Activated CD4-positive, alpha-beta memory T cell treated with anti-CD3 and anti-CD28 coated beads for 36 hours (primary cell): ENCODE measurements at regions of chr19 and their contacts with region 1.

Region 1: DNA sequence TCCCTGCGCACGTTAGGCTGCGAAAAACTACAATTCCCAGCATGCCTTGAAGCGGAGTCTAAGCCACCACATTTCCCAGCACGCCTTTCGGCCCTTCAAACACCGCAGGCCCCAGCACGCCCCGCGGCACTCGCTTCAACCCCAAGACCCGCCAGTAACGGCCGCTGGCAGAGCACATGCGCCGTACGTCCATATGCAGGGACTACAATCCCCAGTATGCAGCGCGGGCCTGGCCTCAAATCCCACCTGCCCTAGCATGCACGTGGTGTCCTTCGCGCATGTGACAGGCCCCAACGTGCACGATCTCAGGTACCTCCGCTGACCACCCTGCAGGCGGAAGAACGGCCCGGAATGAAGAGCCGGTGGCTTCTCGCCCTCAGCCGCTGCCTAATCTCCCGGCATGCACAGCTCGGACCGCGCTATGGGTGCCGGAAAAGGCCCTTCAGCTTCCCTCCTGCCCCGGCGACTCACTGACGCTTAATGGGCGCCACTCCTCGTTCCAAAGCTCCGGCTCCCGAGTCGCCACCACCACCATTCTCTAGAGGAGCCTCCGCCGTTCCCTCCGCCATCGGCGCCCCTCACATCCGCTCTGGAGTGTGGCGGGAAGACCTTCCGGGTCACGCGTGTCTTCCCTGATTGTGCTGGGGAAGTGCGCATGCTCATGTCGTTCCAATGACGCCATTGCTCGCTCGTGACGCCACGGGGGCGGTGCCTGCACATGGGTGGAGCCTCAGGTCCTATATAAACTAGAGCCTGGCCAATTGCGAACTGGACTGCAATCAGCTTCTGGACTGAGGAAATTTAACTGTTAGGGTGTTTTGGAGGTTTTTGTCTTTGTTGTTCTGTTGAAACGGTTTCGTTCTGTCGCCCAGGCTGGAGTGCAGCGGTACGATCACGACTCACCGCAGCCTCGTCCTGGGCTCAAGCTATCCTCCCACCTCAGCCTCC is at the start of gene DUS3L:
- DNase-seq: peak; percentile 98
- H3K4me3 Mint-ChIP-seq: peak within 1 kb of the TSS; percentile 100
- H3K27ac Mint-ChIP-seq: peak within 1 kb of the TSS; percentile 100
- H3K4me1 Mint-ChIP-seq: peaks cover 12% of the 10 kb centered on the region
- H3K27me3 Mint-ChIP-seq: no peaks in the 10 kb centered on the region
- total RNA-seq, gene DUS3L: 41.9 to 44.4 TPM

Region 2: DNA sequence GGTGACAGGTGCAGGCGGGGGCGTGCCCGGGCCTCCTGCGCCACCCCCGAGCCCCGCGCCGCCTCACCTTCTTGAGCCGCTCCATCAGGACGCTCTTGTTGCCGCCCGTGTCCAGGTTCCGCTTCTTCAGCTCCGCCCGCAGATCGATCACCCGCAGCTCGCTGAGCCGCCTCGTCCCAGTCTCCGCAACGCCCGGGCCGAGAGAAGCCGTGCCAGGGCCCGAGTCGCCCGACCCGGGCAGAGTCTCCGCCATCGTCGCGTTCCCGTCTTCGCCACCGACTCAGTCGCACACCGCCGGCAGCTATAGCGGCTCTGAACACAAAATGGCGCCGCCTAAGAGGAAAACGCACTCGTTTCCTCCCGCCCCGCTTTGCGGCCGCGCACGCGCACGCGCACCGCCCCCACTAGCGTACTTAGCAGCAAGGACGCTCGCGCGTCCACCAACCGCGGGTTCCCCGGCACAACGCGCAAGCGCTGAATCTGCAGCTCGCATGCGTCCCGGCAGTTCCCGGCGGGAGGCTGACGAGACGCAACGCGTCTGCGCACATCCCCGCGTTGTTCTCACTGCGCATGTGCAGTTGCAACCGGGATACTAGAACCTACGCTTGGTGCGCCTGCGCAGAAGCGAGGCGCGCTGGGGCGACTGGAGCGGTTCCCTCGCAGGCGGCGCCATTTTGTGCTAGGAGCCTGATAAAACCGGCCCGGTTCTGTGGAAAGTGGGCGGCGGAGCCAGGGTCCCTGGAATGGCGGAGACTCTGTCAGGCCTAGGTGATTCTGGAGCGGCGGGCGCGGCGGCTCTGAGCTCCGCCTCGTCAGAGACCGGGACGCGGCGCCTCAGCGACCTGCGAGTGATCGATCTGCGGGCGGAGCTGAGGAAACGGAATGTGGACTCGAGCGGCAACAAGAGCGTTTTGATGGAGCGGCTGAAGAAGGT is 168.1 kb before region 1 on chr19 and contains the starts of genes SAFB and SAFB2:
- CTCF ChIA-PET with region 1: no interaction called
- POLR2A ChIA-PET with region 1: no interaction called
- intact Hi-C with region 1: loop called (anchors 2 kb)
- DNase-seq: peak; percentile 100
- H3K4me3 Mint-ChIP-seq: peak within 1 kb of the TSS; percentile 100
- H3K27ac Mint-ChIP-seq: peak within 1 kb of the TSS; percentile 100
- H3K4me1 Mint-ChIP-seq: peaks cover 67% of the 10 kb centered on the region
- H3K27me3 Mint-ChIP-seq: peaks cover 3% of the 10 kb centered on the region
- total RNA-seq, gene SAFB: 103 to 113 TPM
- total RNA-seq, gene SAFB2: 63.5 to 76.4 TPM

Region 3: DNA sequence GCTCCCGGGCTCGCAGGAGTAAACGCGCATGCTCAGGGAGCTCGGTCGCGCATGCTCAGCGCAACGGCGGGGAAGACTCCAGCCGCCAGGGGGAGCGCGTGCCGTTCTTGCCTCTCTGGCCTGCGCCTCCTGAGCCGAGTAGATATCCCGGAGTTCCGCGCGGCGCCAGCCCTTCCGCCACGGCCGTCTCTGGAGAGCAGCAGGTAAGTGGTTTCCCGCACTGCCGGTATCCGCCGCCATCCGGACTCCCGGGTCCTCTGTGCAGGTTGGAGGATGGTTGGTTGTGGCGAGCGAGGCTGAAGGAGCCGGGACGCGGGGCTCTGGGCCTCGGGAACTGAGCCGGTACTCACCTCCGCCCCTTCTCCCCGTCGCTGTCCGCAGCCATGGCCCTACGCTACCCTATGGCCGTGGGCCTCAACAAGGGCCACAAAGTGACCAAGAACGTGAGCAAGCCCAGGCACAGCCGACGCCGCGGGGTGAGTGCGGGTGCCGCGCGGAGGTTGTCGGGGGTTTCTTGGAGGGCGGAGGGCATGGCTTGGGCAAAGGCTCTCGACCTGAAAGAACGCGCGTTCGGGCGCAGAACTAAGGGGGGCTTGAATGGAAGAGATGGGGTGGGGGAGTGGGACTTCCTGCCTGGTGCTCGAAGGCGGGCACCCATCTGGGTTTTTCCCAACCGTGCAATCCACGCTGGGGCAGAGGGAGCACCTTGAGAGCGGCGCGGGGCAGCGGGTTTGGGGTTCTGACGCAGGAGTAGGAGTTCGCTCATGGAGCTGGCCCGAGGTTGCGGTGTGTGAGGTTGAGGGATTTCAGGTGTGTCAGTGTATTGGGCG is 100.5 kb before region 1 on chr19 and contains the start of gene RPL36:
- CTCF ChIA-PET with region 1: interaction called, 10 read pairs
- POLR2A ChIA-PET with region 1: interaction called, 5 read pairs
- intact Hi-C with region 1: loop called (anchors 2 kb)
- DNase-seq: peak; percentile 99
- H3K4me3 Mint-ChIP-seq: peak within 1 kb of the TSS; percentile 96
- H3K27ac Mint-ChIP-seq: peak within 1 kb of the TSS; percentile 95
- H3K4me1 Mint-ChIP-seq: peaks cover 31% of the 10 kb centered on the region
- H3K27me3 Mint-ChIP-seq: no peaks in the 10 kb centered on the region
- total RNA-seq, gene RPL36: 1,487 to 1,524 TPM

Region 4: GRCh38 chr19:5827891-5828660 is 37.2 kb after region 1 on chr19:
- CTCF ChIA-PET with region 1: interaction called, 3 read pairs
- POLR2A ChIA-PET with region 1: interaction called, 4 read pairs
- intact Hi-C with region 1: loop called (anchors 1 kb)
- DNase-seq: peak; percentile 97
- H3K4me3 Mint-ChIP-seq: peak overlapping the region; percentile 98
- H3K27ac Mint-ChIP-seq: peak overlapping the region; percentile 97
- H3K4me1 Mint-ChIP-seq: peaks cover 4% of the 10 kb centered on the region
- H3K27me3 Mint-ChIP-seq: no peaks in the 10 kb centered on the region

Region 5: GRCh38 chr19:7069042-7069903 is 1278.4 kb after region 1 on chr19 and contains the start of gene ZNF557:
- CTCF ChIA-PET with region 1: no interaction called
- POLR2A ChIA-PET with region 1: no interaction called
- intact Hi-C with region 1: loop called (anchors 10 kb)
- DNase-seq: peak; percentile 99
- H3K4me3 Mint-ChIP-seq: peak within 1 kb of the TSS; percentile 87
- H3K27ac Mint-ChIP-seq: peak within 1 kb of the TSS; percentile 83
- H3K4me1 Mint-ChIP-seq: peaks cover 11% of the 10 kb centered on the region
- H3K27me3 Mint-ChIP-seq: no peaks in the 10 kb centered on the region
- total RNA-seq, gene ZNF557: 7.6 to 8.0 TPM